ENCODE measurements at regions of chr1 and their contacts with region 1.

Region 1: DNA sequence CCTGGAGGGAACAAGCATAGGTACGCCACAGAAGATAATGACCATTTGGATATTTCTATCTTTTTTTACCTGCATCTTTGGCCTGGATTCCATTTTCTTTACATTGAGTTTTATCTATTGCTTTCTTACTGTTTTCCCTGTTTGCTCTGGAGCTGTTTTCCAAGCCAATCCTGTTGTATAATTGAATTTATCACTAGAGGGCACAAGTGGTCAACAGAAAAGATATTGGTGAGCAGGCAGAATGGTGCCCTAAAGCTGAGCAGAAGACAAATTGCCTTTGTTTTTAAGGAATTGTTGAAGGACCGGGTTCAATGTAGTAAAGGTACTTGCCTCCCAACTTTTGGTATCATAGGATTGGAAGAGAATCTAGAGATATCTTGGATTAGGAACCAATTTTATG is 152.8 kb downstream of the PPP1R12B start:
- DNase-seq: peak; percentile 12
- ATAC-seq: peak; percentile 75
- H3K4me3 ChIP-seq: no peak overlapping the region
- H3K27ac ChIP-seq: no peak overlapping the region
- H3K4me1 ChIP-seq: no peaks in the 10 kb centered on the region
- H3K27me3 ChIP-seq: no peaks in the 10 kb centered on the region
- CTCF ChIP-seq: peak; percentile 32 to 75 (median 54)
- POLR2A ChIP-seq: no peak
- RAD21 ChIP-seq: peak; percentile 78

Region 2: GRCh38 chr1:202599677-202600431 is 98.6 kb after region 1 on chr1:
- CTCF ChIA-PET with region 1: interaction called, 14 read pairs
- POLR2A ChIA-PET with region 1: no interaction called
- RAD21 ChIA-PET with region 1: interaction called in 1 of 2 experiments, 5 read pairs
- intact Hi-C with region 1: loop called (anchors 1 kb)
- DNase-seq: peak; percentile 34
- ATAC-seq: peak; percentile 99
- H3K4me3 ChIP-seq: no peak overlapping the region
- H3K27ac ChIP-seq: no peak overlapping the region
- H3K4me1 ChIP-seq: peaks cover 0 to 8% of the 10 kb centered on the region in 2 experiments; a peak in 1 of 4 replicates
- H3K27me3 ChIP-seq: no peaks in the 10 kb centered on the region
- CTCF ChIP-seq: peak; percentile 76 to 87 (median 81)
- POLR2A ChIP-seq: no peak
- RAD21 ChIP-seq: peak; percentile 94

Region 3: GRCh38 chr1:202710070-202711045 is 209.1 kb after region 1 on chr1 and contains the start of gene SYT2:
- CTCF ChIA-PET with region 1: no interaction called
- POLR2A ChIA-PET with region 1: no interaction called
- RAD21 ChIA-PET with region 1: no interaction called
- intact Hi-C with region 1: loop called (anchors 10 kb)
- DNase-seq: no peak
- ATAC-seq: no peak
- H3K4me3 ChIP-seq: no peak within 1 kb of the TSS
- H3K27ac ChIP-seq: no peak within 1 kb of the TSS
- H3K4me1 ChIP-seq: no peaks in the 10 kb centered on the region
- H3K27me3 ChIP-seq: peaks cover 59% of the 10 kb centered on the region
- CTCF ChIP-seq: no peak
- POLR2A ChIP-seq: no peak
- RAD21 ChIP-seq: no peak
- total RNA-seq, gene SYT2: not detected